ENCODE measurements at regions of chr13 and their contacts with region 1.

Region 1: DNA sequence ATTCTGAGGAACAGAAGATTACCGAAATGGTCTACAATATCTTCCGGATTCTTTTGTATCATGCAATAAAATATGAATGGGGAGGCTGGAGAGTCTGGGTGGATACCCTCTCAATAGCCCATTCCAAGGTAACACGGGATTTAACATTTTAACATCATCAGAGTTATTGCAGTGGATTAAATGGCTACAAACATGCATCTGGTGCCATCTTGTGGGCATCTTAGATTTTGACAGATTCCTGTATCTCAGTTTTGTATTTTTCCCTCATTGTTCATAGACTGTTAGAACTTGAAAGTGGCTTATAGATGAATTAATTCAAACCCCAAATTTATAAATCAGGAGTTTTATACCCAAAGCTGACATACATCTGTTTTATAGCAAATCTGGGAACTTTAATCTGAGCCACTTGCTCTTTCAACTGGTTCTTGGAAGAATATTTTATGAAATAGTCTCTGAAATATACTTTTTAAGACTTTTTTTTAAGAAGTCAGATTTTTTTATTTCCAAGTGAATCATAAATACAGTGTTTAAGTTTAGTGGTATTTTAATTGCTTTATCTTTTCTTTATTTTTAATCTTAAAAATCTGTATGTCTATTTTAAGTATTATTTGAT is 215.2 kb downstream of the NBEA start:
- DNase-seq: no peak
- ATAC-seq: no peak

Region 2: GRCh38 chr13:34076943-34077703 is 1080.1 kb before region 1 on chr13:
- intact Hi-C with region 1: loop called (anchors 10 kb)
- DNase-seq: no peak
- ATAC-seq: no peak